ENCODE measurements at regions of chr1 and their contacts with region 1.

Region 1: DNA sequence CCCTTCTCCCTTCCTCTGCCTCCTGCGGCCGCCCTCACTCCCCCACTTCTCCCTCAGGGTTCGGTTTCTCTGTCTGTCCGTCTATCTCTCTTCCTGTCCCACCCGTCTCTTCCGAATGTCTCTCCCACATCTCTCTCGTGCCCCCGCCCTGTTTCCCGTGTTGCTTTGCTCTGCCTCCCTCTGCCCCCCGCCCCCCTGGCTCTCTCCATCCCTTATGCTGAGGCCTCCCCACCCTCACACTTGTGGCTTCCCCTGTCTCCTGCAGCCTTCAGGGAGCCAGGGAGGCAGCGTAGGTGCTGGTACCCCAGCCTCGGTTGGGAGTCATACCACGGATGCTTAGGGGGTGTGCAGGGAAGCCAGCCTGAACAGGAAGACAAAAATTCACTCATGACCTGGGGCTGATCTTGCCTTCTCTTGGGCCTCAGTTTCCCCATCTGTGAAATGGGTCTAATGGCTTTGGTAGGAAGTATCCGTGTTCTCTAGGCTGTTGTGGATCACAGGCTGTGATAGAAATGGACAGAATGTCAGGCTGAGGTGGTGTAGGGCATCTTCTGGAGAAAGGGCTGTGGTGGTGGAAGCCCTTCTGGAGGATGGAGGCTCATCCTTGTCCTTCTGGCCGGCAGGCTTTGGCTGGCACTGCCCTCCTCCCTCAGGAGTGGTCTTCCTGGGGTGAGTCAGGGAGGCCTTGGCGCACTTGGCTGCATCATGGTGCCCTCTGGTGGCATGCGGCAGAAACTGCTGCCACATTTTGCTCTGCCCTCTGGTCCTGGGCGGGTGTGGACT is 55.5 kb downstream of the FOXO6 start:
- DNase-seq: peak; percentile 60 to 87 (median 81)
- ATAC-seq: peak; percentile 57 to 72
- H3K4me3 ChIP-seq: no peak overlapping the region
- H3K27ac ChIP-seq: no peak overlapping the region
- H3K4me1 ChIP-seq: no peaks in the 10 kb centered on the region
- H3K27me3 ChIP-seq: no peaks in the 10 kb centered on the region

Region 2: DNA sequence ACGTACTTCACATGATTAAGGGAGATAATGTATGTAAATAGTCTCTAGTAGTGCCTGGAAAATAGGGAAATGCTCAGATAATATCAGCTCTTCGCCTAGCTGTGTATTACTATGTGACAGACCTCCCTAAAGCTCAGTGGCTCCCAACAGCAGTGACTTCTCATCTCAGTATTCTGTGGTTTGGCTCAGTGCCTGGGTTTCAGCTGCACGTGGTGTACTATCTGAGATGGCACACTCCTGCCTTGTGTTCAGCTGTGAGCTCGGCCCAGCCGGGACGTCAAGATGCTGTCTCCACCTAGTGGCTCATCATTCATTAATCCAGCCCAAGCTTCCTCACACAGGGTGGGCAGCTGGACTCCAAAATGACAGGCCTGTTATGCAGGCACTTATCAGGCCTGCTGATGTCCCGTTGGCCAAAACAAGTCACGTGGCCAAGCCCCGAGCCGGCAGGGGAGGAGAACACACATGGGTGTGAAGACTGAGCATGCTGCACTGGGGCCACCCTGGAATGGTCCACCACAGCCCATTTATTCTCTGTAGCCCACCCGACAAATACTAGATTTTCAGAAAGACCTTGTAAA is 413.0 kb before region 1 on chr1:
- intact Hi-C with region 1: no loop called
- DNase-seq: peak; percentile 92 to 96 (median 94)
- ATAC-seq: peak; percentile 95 to 96
- H3K4me3 ChIP-seq: no peak overlapping the region
- H3K27ac ChIP-seq: no peak overlapping the region
- H3K4me1 ChIP-seq: peaks cover 4% of the 10 kb centered on the region
- H3K27me3 ChIP-seq: no peaks in the 10 kb centered on the region

Region 3: DNA sequence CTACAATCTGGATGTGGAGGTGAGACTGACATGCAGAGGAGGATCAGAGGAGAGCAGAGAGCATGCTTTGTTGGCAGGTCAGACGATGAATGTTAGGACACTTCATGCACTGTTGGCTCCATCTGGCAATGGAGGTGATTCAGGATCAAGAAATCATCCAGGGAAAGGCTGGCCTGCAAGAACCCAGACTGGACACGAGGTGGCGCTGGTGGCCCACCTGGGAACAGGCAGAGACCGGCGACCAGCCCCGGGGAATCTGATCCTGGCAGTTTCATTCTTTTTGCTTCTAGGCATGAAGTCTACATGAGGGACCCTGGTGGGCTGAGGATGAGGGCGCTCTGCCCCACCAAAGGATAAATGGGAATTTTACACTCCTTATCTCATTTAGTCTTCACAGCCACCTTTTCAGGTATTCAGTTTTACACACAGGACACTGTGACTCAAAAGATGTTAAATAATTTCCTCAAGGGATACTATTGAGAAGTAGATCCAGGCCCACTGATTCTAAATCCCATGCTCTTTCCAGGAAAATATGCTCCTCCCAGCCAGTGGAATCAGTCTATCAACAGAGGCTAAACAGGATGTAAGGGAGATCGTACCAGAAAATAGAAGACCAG is 148.5 kb before region 1 on chr1:
- intact Hi-C with region 1: loop called (anchors 2 to 5 kb)
- DNase-seq: peak; percentile 76 to 88 (median 86)
- ATAC-seq: peak; percentile 81 to 86
- H3K4me3 ChIP-seq: no peak overlapping the region
- H3K27ac ChIP-seq: no peak overlapping the region
- H3K4me1 ChIP-seq: no peaks in the 10 kb centered on the region
- H3K27me3 ChIP-seq: no peaks in the 10 kb centered on the region

Region 4: GRCh38 chr1:41282679-41283317 is 133.9 kb before region 1 on chr1:
- intact Hi-C with region 1: loop called in 3 of 4 experiments (anchors 5 kb)
- DNase-seq: peak; percentile 37 to 70 (median 64)
- ATAC-seq: peak; percentile 55 to 58
- H3K4me3 ChIP-seq: no peak overlapping the region
- H3K27ac ChIP-seq: no peak overlapping the region
- H3K4me1 ChIP-seq: peaks cover 9% of the 10 kb centered on the region
- H3K27me3 ChIP-seq: no peaks in the 10 kb centered on the region

Region 5: GRCh38 chr1:41322835-41323627 is 93.7 kb before region 1 on chr1:
- intact Hi-C with region 1: loop called (anchors 5 to 10 kb)
- DNase-seq: peak in 2 of 3 donors; percentile 58 to 72
- ATAC-seq: peak; percentile 58
- H3K4me3 ChIP-seq: no peak overlapping the region
- H3K27ac ChIP-seq: no peak overlapping the region
- H3K4me1 ChIP-seq: peaks cover 3% of the 10 kb centered on the region
- H3K27me3 ChIP-seq: no peaks in the 10 kb centered on the region